ENCODE measurements at regions of chr12 and their contacts with region 1.

Region 1: GRCh38 chr12:79710707-79711483 is 20.1 kb upstream of the PAWR start:
- DNase-seq: no peak
- ATAC-seq: no peak
- H3K4me3 ChIP-seq: no peak overlapping the region
- H3K27ac ChIP-seq: no peak overlapping the region
- H3K4me1 ChIP-seq: no peaks in the 10 kb centered on the region
- H3K27me3 ChIP-seq: peaks cover 0 to 3% (median 0%) of the 10 kb centered on the region in 3 donors
- CTCF ChIP-seq: no peak

Region 2: GRCh38 chr12:79690638-79691493 is 20.0 kb before region 1 on chr12 and contains the start of gene PAWR:
- intact Hi-C with region 1: loop called in 1 of 2 experiments (anchors 1 kb)
- DNase-seq: peak; percentile 21 to 57
- ATAC-seq: peak in 3 of 4 donors; percentile 30 to 48 (median 34)
- H3K4me3 ChIP-seq: peak within 1 kb of the TSS; percentile 73
- H3K27ac ChIP-seq: peak within 1 kb of the TSS; percentile 41
- H3K4me1 ChIP-seq: no peaks in the 10 kb centered on the region
- H3K27me3 ChIP-seq: peaks cover 0 to 52% (median 15%) of the 10 kb centered on the region in 3 donors
- CTCF ChIP-seq: no peak
- total RNA-seq, gene PAWR: 1.9 to 3.5 (median 2.7) TPM

Region 3: DNA sequence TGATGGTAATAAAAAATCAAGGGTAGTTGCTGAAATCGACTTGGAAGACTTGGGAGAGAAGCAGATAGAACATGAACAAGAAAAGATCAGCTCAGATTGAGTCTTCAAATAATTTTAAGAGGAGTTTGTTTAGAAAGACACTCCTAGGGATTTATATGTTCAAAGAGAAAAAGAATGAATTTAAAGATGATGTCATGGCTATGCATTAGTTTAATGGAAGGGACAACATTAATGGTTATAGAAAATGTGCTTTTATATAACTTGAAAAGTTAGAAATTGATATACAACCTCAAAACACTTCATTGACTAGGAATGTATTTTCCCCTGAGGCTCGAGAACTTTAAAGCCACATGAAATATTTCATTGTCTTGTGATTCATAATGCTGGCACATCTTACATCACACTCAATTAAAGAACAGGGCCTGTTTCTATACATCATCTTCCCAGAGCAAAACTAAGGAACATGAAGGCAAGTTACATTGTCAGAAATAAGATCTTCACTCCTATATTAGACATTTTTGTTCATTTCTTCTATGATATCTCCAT is 15.0 kb after region 1 on chr12:
- intact Hi-C with region 1: no loop called
- DNase-seq: no peak
- ATAC-seq: no peak
- H3K4me3 ChIP-seq: no peak overlapping the region
- H3K27ac ChIP-seq: no peak overlapping the region
- H3K4me1 ChIP-seq: no peaks in the 10 kb centered on the region
- H3K27me3 ChIP-seq: peaks cover 0 to 2% (median 0%) of the 10 kb centered on the region in 3 donors
- CTCF ChIP-seq: no peak

Region 4: GRCh38 chr12:79766705-79767464 is 56.0 kb after region 1 on chr12:
- intact Hi-C with region 1: loop called in 1 of 2 experiments (anchors 1 kb)
- DNase-seq: no peak
- ATAC-seq: no peak
- H3K4me3 ChIP-seq: no peak overlapping the region
- H3K27ac ChIP-seq: no peak overlapping the region
- H3K4me1 ChIP-seq: no peaks in the 10 kb centered on the region
- H3K27me3 ChIP-seq: no peaks in the 10 kb centered on the region
- CTCF ChIP-seq: no peak